GM13976 (cell line): ENCODE measurements at regions of chr11 and their contacts with region 1.

Region 1: DNA sequence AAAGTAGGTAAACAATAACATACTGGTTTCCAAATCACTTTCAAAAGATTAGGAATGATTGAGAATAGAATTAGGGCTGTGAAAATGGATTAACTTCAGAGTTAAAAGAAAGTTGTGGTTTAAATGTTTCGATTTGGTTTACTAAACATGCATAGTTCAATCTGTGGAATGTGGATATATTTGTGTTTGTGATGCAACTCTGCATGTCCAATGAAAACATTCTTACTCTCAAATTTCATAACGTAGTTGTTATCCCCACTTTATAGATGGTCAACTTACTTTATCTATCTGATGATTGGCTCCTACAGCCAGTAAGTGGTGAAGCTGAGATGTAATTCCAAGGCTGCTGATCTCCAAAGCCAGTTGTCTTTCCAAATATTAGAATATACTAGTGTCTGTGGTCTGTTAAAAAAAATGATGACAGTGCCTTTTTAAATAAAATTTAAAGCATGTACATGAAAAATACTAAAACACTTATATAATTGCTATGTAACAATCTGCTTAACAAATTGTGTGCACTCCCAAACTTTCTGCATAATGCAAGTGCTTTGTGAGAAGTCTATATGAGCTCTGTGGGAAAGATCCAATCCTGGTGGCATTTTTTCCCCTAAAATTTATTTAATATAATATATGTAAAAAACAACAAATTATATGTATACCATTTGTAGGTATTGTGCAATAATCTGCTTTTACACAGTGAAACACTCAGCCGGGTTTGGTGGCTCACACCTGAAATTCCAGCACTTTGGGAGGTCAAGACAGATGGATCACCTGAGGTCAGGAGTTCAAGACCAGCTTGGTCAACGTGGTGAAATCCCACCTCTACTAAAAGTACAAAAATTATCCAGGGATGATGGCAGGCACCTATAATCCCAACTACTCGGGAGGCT is 9.7 kb upstream of the SIK3 start:
- DNase-seq: no peak
- CTCF ChIP-seq: no peak

Region 2: GRCh38 chr11:116787786-116788486 is 320.0 kb before region 1 on chr11 and contains the start of gene ZPR1:
- in situ Hi-C with region 1: loop called (anchors 25 kb)
- DNase-seq: peak; percentile 94
- CTCF ChIP-seq: no peak

Region 3: DNA sequence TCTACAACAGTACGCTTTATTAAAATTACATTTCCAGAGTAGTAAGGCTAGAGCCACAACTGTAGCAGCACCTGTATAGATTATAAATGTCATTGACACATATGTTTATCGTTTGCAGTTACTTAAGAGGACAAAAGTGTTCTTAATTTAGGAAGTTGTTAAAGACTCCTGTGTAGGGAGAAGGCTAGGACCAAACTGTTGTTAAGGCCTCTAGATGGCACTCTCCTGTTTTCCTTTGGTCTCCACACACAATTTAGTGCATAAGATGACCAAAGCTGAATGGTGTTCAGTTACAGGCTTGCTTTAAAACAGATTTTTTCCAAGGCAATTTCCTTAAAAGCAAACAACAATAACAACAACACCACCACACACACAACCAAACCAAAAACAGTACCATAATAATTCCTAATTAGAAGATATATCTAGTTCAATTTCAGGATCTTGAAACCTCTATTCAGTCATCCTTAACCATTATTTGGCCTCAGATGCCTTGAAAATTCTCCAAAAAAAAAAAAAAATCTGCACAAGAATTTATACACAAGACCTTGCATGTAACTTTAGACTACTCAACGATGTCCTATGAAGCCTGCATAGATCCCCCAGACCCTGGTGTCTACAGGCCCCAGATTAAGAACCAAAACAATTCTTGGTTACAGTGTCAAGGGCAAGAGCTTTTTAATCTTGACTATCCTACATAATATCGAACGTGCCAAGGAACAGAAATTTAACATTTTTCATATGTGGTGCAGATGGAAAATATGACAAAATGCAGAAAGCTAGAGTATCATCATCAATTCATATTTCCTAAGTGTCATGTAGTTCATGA is 227.9 kb before region 1 on chr11:
- in situ Hi-C with region 1: loop called (anchors 10 kb)
- DNase-seq: peak; percentile 70
- CTCF ChIP-seq: peak; percentile 50